OCI-LY7 (cell line): ENCODE measurements at regions of chr17 and their contacts with region 1.

Region 1: DNA sequence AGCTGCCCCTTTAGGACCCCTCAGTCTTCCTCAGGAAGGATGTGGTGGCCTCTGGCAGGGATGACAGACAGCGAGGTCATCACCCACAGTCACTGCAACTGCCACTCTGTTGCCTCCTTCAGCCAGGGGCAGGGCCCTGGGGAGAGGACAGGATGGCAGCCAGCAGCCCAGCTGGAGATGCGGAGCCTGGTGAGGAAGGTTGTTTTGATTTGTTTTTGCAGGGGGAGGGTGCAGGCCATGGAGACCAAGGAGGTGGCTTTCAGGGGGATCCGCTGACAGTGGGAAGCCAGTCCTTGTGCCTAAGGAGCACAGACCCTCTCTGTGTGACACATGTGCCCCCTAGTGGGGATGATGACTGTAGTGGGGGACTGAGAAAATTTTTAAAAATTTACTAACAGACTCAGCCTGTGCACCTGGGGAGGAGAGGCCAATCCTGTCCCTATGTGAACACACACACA is 7.4 kb downstream of the PRCD start:
- DNase-seq: peak; percentile 91
- H3K4me3 ChIP-seq: no peak overlapping the region
- H3K27ac ChIP-seq: no peak overlapping the region
- H3K4me1 ChIP-seq: peaks cover 19% of the 10 kb centered on the region
- CTCF ChIP-seq: peak; percentile 99

Region 2: GRCh38 chr17:76408052-76408849 is 139.0 kb before region 1 on chr17:
- CTCF ChIA-PET with region 1: no interaction called
- POLR2A ChIA-PET with region 1: no interaction called
- intact Hi-C with region 1: loop called (anchors 5 kb)
- DNase-seq: peak; percentile 89
- H3K4me3 ChIP-seq: no peak overlapping the region
- H3K27ac ChIP-seq: peak overlapping the region; percentile 1
- H3K4me1 ChIP-seq: peaks cover 48% of the 10 kb centered on the region
- CTCF ChIP-seq: peak; percentile 100

Region 3: DNA sequence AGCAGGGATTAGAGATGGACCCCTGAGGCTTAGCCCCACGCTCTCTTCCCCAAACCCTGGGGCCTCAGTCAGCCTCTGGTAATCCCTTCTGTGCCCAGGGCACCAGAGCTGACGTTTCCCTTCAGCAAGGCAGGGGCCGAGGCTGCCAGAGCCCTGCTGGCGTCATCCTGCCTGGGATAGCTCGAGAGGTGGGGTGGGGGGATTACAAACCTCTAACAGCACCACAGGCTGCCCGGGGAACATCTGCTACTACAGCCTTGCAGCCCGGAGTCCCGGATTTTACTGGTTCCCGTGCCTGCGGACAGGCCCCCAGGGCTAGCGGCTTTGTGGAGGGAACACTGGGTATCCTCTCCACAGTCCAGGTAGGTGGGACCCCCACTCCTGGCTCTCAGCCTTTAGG is 79.8 kb before region 1 on chr17 and contains the start of gene AANAT:
- CTCF ChIA-PET with region 1: no interaction called
- POLR2A ChIA-PET with region 1: no interaction called
- intact Hi-C with region 1: loop called (anchors 2 kb)
- DNase-seq: no peak
- H3K4me3 ChIP-seq: no peak within 1 kb of the TSS
- H3K27ac ChIP-seq: peak within 1 kb of the TSS; percentile 38
- H3K4me1 ChIP-seq: peaks cover 35% of the 10 kb centered on the region
- CTCF ChIP-seq: no peak
- total RNA-seq, gene AANAT: not detected in 2 replicates

Region 4: DNA sequence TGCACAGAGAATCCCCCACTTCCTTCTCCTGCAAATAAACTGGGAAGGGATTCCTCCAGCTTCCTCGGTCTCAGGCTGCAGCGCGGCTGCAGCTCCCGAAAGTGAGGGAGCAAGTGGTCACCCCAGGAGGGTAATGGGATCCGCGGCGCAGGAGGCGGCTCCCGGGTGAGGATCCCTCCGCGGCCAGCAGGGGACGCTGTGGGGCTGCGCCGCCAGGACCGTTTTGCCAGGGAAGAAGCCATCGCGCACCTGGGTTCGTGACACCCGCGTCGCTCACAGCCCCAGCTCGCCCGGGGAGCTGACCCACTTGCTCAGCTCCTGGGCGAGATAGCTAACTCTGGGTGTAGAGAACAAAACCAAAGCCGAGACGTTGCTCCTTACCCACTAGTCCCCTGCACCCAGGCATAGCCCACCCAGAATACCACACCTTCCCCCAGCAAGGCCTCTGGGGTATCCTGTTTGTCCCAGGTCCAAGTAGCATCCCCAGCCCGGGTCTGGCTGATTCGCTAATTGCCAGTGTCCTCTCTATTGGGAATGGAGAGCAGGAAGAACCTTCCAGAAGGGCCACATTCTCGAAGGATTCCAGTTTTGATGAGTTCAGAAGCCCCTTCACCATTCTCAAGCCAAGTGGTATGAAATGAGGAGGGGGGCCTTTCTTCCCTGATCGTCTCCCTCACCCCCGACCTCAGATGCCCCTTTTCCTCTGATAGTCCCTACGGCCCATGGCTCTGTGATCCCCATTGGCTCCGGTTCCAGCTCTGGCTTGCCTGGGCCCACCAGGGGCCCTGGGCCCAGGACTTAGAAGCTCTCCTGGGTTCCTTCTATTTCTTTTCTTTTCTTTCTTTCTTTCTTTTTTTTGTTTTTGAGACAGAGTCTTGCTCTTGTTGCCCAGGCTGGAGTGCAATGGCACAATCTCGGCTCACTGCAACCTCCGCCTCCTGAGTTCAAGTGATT is 23.9 kb before region 1 on chr17:
- CTCF ChIA-PET with region 1: interaction called, 8 read pairs
- POLR2A ChIA-PET with region 1: interaction called, 8 read pairs
- intact Hi-C with region 1: loop called (anchors 1 kb)
- DNase-seq: peak; percentile 85
- H3K4me3 ChIP-seq: no peak overlapping the region
- H3K27ac ChIP-seq: no peak overlapping the region
- H3K4me1 ChIP-seq: peaks cover 31% of the 10 kb centered on the region
- CTCF ChIP-seq: peak; percentile 100